Heart left ventricle (tissue), 16 donors: ENCODE measurements at regions of chr16 and their contacts with region 1.

Region 1: DNA sequence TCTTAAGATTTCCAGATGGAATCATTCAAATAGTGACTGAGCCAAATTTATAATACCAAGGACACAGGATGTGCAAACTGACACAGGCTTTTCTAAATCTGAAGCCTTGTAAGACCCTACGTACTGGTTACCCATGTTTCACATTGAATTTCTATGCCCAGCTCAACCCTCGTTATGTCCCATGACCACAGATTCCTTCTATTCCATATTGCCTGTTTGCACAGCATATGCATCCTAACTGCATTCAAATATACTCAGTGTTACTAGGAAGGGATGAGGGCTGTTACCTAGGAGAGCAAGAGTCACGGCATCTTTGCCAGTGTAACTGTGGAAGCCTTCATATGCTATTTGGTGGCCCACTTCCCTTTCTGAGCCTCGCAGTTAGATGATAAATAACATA is 305.2 kb downstream of the SHISA9 start:
- DNase-seq: no peak
- ATAC-seq: no peak
- H3K4me3 ChIP-seq: no peak overlapping the region
- H3K27ac ChIP-seq: no peak overlapping the region
- H3K4me1 ChIP-seq: no peaks in the 10 kb centered on the region
- H3K27me3 ChIP-seq: peaks cover 0 to 8% (median 0%) of the 10 kb centered on the region in 9 donors
- CTCF ChIP-seq: no peak
- POLR2A ChIP-seq: no peak

Region 2: GRCh38 chr16:12439399-12440230 is 767.0 kb before region 1 on chr16:
- intact Hi-C with region 1: loop called in 1 of 10 experiments (anchors 10 kb)
- DNase-seq: peak in 1 of 5 donors; percentile 34
- ATAC-seq: no peak
- H3K4me3 ChIP-seq: no peak overlapping the region
- H3K27ac ChIP-seq: no peak overlapping the region
- H3K4me1 ChIP-seq: peaks cover 0 to 5% (median 0%) of the 10 kb centered on the region in 12 donors
- H3K27me3 ChIP-seq: no peaks in the 10 kb centered on the region
- CTCF ChIP-seq: no peak
- POLR2A ChIP-seq: no peak

Region 3: DNA sequence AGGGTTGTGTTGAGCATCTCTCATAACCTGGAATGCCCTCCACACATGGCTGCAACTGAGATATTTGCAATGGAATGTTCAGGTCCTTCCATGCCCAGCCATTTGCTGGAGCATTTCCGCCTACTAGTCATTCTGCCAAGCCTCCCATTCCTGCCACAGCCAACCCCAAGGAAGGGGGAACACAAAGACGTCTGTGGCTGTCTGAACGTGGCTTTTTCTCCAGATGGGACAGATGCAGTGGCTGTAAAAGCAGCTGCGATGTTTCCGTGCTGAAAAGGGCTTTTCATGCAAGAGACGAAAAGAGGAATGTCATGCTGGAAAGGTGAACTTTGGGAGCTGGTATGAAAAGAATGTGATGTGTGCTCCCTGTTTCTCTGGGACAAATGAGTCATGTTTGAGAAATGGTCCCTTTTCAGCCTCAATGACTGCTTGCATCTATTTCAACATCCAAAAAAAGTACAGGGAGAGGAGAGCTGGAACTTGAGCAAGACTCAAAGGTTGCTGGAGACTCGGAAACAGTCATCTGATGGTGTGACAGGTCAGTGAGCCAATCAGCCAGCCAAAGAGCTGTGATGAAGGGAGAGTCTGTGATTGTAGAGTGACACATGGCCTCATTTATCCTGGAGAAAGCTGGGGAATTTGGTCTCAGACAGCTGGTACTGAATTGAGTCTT is 96.3 kb before region 1 on chr16:
- intact Hi-C with region 1: no loop called
- DNase-seq: no peak
- ATAC-seq: no peak
- H3K4me3 ChIP-seq: no peak overlapping the region
- H3K27ac ChIP-seq: no peak overlapping the region
- H3K4me1 ChIP-seq: no peaks in the 10 kb centered on the region
- H3K27me3 ChIP-seq: peaks cover 0 to 2% (median 0%) of the 10 kb centered on the region in 9 donors
- CTCF ChIP-seq: no peak
- POLR2A ChIP-seq: no peak

Region 4: DNA sequence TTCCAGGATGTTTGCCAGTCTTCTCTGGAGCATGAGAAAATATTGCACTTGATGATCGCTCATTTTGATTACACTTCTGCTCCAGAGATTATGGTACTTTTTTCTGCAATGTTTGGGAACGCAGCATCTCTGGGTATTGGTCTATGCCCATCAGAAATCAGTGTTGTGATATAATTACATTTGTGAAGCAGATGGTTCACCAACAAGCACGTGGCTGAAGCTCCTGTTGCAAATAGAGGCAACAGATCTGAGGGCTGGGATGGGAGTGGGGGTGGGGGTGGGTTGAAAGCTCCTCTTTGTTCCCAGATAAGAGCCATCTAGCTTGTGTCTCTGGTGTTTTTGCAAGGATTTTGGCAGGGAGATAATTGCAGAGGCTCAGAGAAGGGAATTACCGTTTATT is 52.9 kb before region 1 on chr16:
- intact Hi-C with region 1: no loop called
- DNase-seq: no peak
- ATAC-seq: no peak
- H3K4me3 ChIP-seq: no peak overlapping the region
- H3K27ac ChIP-seq: no peak overlapping the region
- H3K4me1 ChIP-seq: no peaks in the 10 kb centered on the region
- H3K27me3 ChIP-seq: peaks cover 0 to 4% (median 0%) of the 10 kb centered on the region in 9 donors
- CTCF ChIP-seq: no peak
- POLR2A ChIP-seq: no peak